PC-9 (cell line): ENCODE measurements at regions of chr17 and their contacts with region 1.

Region 1: GRCh38 chr17:48603959-48604769 is 622 bp downstream of the HOXB6 start:
- DNase-seq: peak; percentile 66 to 68
- H3K4me3 ChIP-seq: peak overlapping the region; percentile 74
- H3K27ac ChIP-seq: peak overlapping the region; percentile 63
- H3K4me1 ChIP-seq: peaks cover 26% of the 10 kb centered on the region
- H3K27me3 ChIP-seq: no peaks in the 10 kb centered on the region
- CTCF ChIP-seq: peak; percentile 44

Region 2: DNA sequence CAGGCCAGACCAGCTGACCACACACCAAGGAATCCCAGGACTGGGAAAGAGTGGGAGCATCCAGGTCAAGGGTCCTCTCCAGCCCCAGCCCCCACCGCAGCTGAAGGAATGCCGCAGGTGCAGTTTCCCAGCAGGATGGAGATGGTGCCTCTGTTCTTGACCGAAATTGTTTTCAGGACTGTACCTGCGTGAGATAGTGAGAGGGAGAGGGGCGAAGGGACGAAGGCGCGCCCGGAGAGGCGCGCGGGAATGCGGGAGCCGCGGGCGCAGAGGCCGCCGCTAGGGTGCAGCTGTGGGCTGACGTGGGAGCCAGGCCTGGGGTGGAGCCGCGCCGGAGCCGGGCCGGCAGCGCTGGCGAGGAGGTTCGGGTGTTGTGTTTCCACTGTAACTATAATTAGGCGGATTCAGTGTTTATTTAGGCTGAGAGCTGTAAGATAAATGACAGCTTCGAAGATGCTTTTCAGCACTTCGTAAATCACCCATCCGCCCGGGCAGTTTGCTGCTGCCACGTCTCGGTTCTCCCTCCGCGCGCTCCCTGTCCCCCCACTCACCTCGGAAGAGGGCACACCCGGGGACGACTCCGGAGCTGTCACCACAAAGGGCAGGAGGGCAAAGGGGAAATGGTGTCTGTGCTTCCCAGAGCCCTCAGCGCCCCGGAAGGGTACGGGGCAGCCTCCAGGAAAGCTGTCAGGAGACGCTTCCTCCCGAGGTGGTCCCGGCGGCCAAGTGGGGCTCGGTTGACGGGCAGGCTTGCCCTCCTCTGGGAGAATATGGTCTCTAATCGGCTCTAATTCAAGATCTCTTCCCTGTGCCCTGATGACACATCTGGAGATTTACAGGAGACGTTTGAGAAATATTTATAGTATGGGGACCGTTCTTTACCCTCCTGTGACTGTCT is 111.5 kb before region 1 on chr17:
- CTCF ChIA-PET with region 1: no interaction called
- POLR2A ChIA-PET with region 1: interaction called, 19 read pairs
- intact Hi-C with region 1: no loop called
- DNase-seq: peak; percentile 50 to 59
- H3K4me3 ChIP-seq: peak overlapping the region; percentile 51; the same call in 1 of the 2 replicates
- H3K27ac ChIP-seq: no peak overlapping the region
- H3K4me1 ChIP-seq: peaks cover 64% of the 10 kb centered on the region
- H3K27me3 ChIP-seq: no peaks in the 10 kb centered on the region
- CTCF ChIP-seq: peak; percentile 72

Region 3: DNA sequence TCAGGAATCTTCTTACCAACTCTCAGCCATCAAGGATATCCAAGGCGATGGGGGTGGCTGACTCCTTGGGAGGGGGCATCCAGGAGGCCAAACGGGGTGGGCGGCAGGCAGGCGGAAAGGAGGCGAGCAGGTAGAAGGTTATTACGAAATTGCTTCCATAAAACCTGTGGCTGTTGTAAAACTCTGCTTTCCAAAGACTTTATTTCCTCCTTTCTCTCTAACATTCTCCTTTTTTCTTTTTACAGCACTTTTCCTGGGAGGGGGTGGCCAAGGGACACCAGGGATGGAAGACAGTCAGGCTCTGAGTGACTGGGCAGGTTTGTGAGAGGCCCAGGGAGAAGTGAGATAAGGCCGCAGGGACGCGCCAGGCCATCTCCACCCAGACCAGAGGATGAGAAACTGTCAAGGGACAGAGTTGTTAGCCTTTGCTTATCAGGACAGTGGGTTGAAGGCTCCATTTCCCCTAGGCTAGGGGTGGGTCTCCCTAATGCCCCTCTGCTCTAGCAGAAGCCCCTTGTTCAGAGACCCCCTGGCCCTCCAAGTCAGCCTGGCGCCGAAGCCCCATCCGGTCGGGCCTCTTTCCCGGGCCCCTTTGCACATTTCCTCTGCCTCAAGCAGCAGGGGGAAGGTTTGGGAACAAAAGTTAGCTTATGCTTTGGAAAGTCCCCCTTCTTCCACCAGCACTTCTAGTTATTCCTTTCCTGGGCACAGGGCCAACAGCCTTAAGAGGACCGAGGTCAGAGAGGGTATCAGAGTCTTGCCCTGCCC is 26.9 kb after region 1 on chr17:
- CTCF ChIA-PET with region 1: no interaction called
- POLR2A ChIA-PET with region 1: no interaction called
- intact Hi-C with region 1: no loop called
- DNase-seq: no peak
- H3K4me3 ChIP-seq: no peak overlapping the region
- H3K27ac ChIP-seq: no peak overlapping the region
- H3K4me1 ChIP-seq: peaks cover 3% of the 10 kb centered on the region; the same call in 1 of the 2 replicates
- H3K27me3 ChIP-seq: peaks cover 50% of the 10 kb centered on the region
- CTCF ChIP-seq: no peak

Region 4: GRCh38 chr17:48690655-48691054 is 86.5 kb after region 1 on chr17:
- CTCF ChIA-PET with region 1: no interaction called
- POLR2A ChIA-PET with region 1: no interaction called
- intact Hi-C with region 1: no loop called
- DNase-seq: no peak
- H3K4me3 ChIP-seq: no peak overlapping the region
- H3K27ac ChIP-seq: no peak overlapping the region
- H3K4me1 ChIP-seq: no peaks in the 10 kb centered on the region
- H3K27me3 ChIP-seq: peaks cover 13% of the 10 kb centered on the region; the same call in 1 of the 2 replicates
- CTCF ChIP-seq: no peak

Region 5: GRCh38 chr17:48701864-48702532 is 97.8 kb after region 1 on chr17:
- CTCF ChIA-PET with region 1: no interaction called
- POLR2A ChIA-PET with region 1: no interaction called
- intact Hi-C with region 1: no loop called
- DNase-seq: no peak
- H3K4me3 ChIP-seq: no peak overlapping the region
- H3K27ac ChIP-seq: no peak overlapping the region
- H3K4me1 ChIP-seq: no peaks in the 10 kb centered on the region
- H3K27me3 ChIP-seq: peaks cover 74% of the 10 kb centered on the region
- CTCF ChIP-seq: no peak